A549 (cell line): ENCODE measurements at regions of chr14 and their contacts with region 1.

Region 1: DNA sequence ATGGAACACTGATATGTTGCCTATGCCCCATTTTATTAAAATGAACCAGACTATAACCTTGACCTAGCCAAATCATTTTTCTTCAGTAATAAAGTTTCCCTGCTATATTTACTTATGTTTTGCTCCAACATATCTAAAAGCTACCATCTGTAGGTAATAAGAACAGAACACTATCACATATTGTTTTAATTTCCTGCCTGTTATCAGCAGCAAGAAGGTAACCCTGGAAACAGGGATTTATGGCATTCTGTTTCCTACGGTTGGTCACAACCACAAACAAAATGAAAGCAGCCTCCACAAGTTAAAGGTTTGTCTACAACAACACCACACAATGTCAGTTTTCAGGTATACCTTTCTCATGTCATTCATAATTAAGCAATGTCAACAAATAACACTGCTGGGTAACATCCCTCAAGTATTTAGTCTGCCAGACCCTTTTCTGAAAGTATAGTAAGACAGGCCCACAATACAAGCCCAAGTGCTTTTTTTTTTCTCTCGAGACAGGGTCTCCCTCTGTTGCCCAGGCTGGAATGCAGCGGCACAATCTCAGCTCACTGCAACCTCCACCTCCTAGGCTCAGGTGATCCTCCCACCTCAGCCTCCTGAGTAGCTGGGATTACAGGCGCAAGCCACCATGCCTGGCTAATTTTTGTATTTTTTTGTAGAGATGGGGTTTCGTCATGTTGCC is 25.5 kb downstream of the GCH1 start:
- DNase-seq: no peak
- ATAC-seq: no peak
- H3K4me3 ChIP-seq: no peak overlapping the region
- H3K27ac ChIP-seq: no peak overlapping the region
- H3K4me1 ChIP-seq: no peaks in the 10 kb centered on the region
- CTCF ChIP-seq: no peak
- EP300 ChIP-seq: no peak
- POLR2A ChIP-seq: no peak
- RAD21 ChIP-seq: no peak

Region 2: DNA sequence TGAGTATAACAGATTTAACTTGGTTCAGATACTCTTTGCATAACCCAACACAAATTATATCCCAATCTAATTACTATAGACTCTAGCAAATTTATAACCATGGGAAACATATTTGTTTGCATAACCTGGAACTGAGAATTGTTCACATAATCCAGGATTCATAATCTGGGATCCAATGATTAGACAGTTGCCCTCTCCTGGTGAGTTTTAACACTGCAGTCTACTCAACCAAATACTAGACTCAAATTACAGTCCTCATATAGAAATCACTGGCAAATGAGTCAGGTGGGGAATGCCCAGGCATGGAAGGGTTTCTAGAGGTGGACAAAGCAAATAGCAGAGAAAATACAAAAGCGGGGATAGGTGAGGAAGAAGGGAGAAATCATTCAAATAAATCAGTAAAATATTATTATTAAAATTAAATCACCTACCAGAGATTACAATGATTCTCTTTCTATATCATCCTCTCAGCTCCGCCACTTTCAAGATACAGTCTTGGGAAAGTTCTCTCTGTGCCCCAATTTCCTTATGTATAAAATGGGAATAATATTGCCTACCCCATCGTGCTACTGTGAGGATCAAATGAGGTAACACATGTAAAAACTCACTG is 16.1 kb after region 1 on chr14:
- CTCF ChIA-PET with region 1: interaction called, 14 read pairs
- POLR2A ChIA-PET with region 1: no interaction called
- DNase-seq: peak; percentile 56 to 64
- ATAC-seq: peak; percentile 68 to 85; a peak in 4 of 6 replicates
- H3K4me3 ChIP-seq: no peak overlapping the region
- H3K27ac ChIP-seq: no peak overlapping the region
- H3K4me1 ChIP-seq: no peaks in the 10 kb centered on the region
- CTCF ChIP-seq: peak; percentile 64
- EP300 ChIP-seq: no peak
- POLR2A ChIP-seq: no peak
- RAD21 ChIP-seq: peak; percentile 36 to 47; a peak in 4 of 5 replicates

Region 3: GRCh38 chr14:54909817-54910558 is 32.8 kb after region 1 on chr14:
- CTCF ChIA-PET with region 1: no interaction called
- POLR2A ChIA-PET with region 1: no interaction called
- DNase-seq: no peak
- ATAC-seq: no peak
- H3K4me3 ChIP-seq: no peak overlapping the region
- H3K27ac ChIP-seq: no peak overlapping the region
- H3K4me1 ChIP-seq: no peaks in the 10 kb centered on the region
- CTCF ChIP-seq: no peak
- EP300 ChIP-seq: no peak
- POLR2A ChIP-seq: no peak
- RAD21 ChIP-seq: no peak

Region 4: DNA sequence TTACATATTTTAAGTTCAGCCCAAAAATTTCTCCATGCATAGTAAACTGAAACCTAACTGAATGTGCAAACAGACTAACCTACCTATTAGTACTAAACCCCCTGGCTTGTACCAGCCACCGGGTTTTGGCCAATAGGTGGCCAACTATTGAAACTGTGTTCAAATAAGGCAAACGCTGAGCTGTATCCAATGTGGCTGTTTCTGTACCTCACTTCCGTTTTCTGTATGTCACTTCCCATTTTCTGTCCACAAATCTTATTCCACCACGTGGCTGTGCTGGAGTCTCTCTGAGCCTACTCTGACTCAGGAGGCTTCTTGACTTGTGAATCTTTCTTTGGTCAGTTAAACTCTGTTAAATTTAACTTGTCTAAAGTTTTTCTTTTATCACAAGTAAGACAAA is 388.0 kb after region 1 on chr14:
- CTCF ChIA-PET with region 1: no interaction called
- POLR2A ChIA-PET with region 1: no interaction called
- DNase-seq: peak in 1 of 2 experiments; percentile 41
- ATAC-seq: no peak; a peak in 1 of 6 replicates
- H3K4me3 ChIP-seq: no peak overlapping the region
- H3K27ac ChIP-seq: no peak overlapping the region
- H3K4me1 ChIP-seq: no peaks in the 10 kb centered on the region
- CTCF ChIP-seq: no peak
- EP300 ChIP-seq: no peak
- POLR2A ChIP-seq: no peak
- RAD21 ChIP-seq: no peak